CD4-positive, alpha-beta T cell (primary cell): ENCODE measurements at regions of chr4 and their contacts with region 1.

Region 1: GRCh38 chr4:1351854-1352633 is 5.0 kb downstream of the UVSSA start:
- DNase-seq: peak; percentile 80 to 94 (median 89)
- ATAC-seq: peak; percentile 39
- H3K4me3 ChIP-seq: no peak overlapping the region
- H3K4me3 Mint-ChIP-seq: peak overlapping the region; percentile 66
- H3K27ac ChIP-seq: no peak overlapping the region
- H3K27ac Mint-ChIP-seq: peak overlapping the region; percentile 77
- H3K4me1 ChIP-seq: peaks cover 36% of the 10 kb centered on the region
- H3K4me1 Mint-ChIP-seq: peaks cover 38% of the 10 kb centered on the region
- H3K27me3 ChIP-seq: no peaks in the 10 kb centered on the region
- H3K27me3 Mint-ChIP-seq: no peaks in the 10 kb centered on the region
- CTCF ChIP-seq: peak; percentile 92

Region 2: GRCh38 chr4:742742-743311 is 609.2 kb before region 1 on chr4:
- CTCF ChIA-PET with region 1: no interaction called
- POLR2A ChIA-PET with region 1: no interaction called
- intact Hi-C with region 1: loop called (anchors 2 to 5 kb)
- DNase-seq: peak; percentile 62 to 84 (median 74)
- ATAC-seq: peak; percentile 83
- H3K4me3 ChIP-seq: no peak overlapping the region
- H3K4me3 Mint-ChIP-seq: no peak overlapping the region
- H3K27ac ChIP-seq: no peak overlapping the region
- H3K27ac Mint-ChIP-seq: no peak overlapping the region
- H3K4me1 ChIP-seq: peaks cover 6% of the 10 kb centered on the region
- H3K4me1 Mint-ChIP-seq: no peaks in the 10 kb centered on the region
- H3K27me3 ChIP-seq: no peaks in the 10 kb centered on the region
- H3K27me3 Mint-ChIP-seq: no peaks in the 10 kb centered on the region
- CTCF ChIP-seq: peak; percentile 88

Region 3: DNA sequence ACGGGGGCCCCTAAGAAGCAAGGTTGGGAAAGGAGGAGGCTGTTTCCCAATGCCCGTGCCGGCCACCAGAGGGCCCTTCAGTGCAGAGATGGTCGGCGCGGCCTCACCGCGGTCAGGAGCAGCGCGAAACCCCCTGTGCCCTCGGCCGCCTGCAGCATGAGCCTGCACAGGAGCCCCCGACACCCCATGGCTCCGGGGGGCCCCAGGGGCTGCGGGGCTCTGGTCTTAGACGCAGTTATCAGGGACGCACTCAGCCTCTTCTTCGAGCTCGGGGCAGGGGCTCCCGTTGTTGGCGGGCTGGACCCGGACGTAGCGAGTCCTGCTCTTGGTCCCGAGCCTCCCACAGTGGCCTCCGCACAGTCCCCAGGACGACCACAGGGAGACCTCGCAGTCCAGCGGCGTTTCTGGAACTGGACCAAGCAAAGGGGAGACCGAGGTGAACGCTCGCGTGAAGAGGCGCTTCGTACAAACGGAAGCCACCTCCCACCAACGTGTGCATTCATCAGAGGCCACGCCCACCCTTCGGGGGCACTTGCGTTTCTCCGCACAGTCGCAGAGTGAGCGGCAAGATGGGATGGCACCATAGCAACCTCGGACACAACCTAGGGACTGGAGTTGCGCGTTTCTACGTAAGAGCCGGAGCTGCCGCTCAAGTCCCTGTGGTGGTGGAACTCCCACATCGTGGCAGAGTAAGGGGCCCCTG is 184.6 kb before region 1 on chr4:
- CTCF ChIA-PET with region 1: interaction called, 9 read pairs
- POLR2A ChIA-PET with region 1: interaction called, 7 read pairs
- intact Hi-C with region 1: loop called (anchors 1 kb)
- DNase-seq: peak; percentile 69 to 96 (median 84)
- ATAC-seq: peak; percentile 87
- H3K4me3 ChIP-seq: peak overlapping the region; percentile 79
- H3K4me3 Mint-ChIP-seq: peak overlapping the region; percentile 90
- H3K27ac ChIP-seq: no peak overlapping the region
- H3K27ac Mint-ChIP-seq: peak overlapping the region; percentile 67
- H3K4me1 ChIP-seq: peaks cover 40% of the 10 kb centered on the region
- H3K4me1 Mint-ChIP-seq: peaks cover 25% of the 10 kb centered on the region
- H3K27me3 ChIP-seq: peaks cover 19 to 21% of the 10 kb centered on the region in 2 experiments
- H3K27me3 Mint-ChIP-seq: peaks cover 16% of the 10 kb centered on the region
- CTCF ChIP-seq: peak; percentile 97

Region 4: GRCh38 chr4:1604711-1605205 is 252.7 kb after region 1 on chr4:
- CTCF ChIA-PET with region 1: no interaction called
- POLR2A ChIA-PET with region 1: interaction called, 15 read pairs
- intact Hi-C with region 1: loop called in 1 of 2 experiments (anchors 2 kb)
- DNase-seq: peak in 11 of 14 experiments; percentile 39 to 87 (median 63)
- ATAC-seq: peak; percentile 80
- H3K4me3 ChIP-seq: peak overlapping the region; percentile 43
- H3K4me3 Mint-ChIP-seq: peak overlapping the region; percentile 74
- H3K27ac ChIP-seq: peak overlapping the region in 1 of 2 donors; percentile 29
- H3K27ac Mint-ChIP-seq: peak overlapping the region; percentile 85
- H3K4me1 ChIP-seq: peaks cover 46% of the 10 kb centered on the region
- H3K4me1 Mint-ChIP-seq: peaks cover 21% of the 10 kb centered on the region
- H3K27me3 ChIP-seq: no peaks in the 10 kb centered on the region
- H3K27me3 Mint-ChIP-seq: no peaks in the 10 kb centered on the region
- CTCF ChIP-seq: peak; percentile 52

Region 5: GRCh38 chr4:1721004-1721665 is 369.1 kb after region 1 on chr4 and contains the starts of genes TACC3 and TMEM129:
- CTCF ChIA-PET with region 1: no interaction called
- POLR2A ChIA-PET with region 1: interaction called, 12 read pairs
- intact Hi-C with region 1: loop called in 1 of 2 experiments (anchors 5 kb)
- DNase-seq: peak; percentile 90 to 99 (median 95)
- ATAC-seq: peak; percentile 80
- H3K4me3 ChIP-seq: peak within 1 kb of the TSS; percentile 53
- H3K4me3 Mint-ChIP-seq: peak within 1 kb of the TSS; percentile 92
- H3K27ac ChIP-seq: peak within 1 kb of the TSS; percentile 85 to 88
- H3K27ac Mint-ChIP-seq: peak within 1 kb of the TSS; percentile 99
- H3K4me1 ChIP-seq: peaks cover 77% of the 10 kb centered on the region
- H3K4me1 Mint-ChIP-seq: peaks cover 56% of the 10 kb centered on the region
- H3K27me3 ChIP-seq: no peaks in the 10 kb centered on the region
- H3K27me3 Mint-ChIP-seq: no peaks in the 10 kb centered on the region
- CTCF ChIP-seq: no peak
- total RNA-seq, gene TACC3: 123 TPM
- total RNA-seq, gene TMEM129: 17.2 to 17.6 TPM